ENCODE measurements at regions of chr3 and their contacts with region 1.

Region 1: DNA sequence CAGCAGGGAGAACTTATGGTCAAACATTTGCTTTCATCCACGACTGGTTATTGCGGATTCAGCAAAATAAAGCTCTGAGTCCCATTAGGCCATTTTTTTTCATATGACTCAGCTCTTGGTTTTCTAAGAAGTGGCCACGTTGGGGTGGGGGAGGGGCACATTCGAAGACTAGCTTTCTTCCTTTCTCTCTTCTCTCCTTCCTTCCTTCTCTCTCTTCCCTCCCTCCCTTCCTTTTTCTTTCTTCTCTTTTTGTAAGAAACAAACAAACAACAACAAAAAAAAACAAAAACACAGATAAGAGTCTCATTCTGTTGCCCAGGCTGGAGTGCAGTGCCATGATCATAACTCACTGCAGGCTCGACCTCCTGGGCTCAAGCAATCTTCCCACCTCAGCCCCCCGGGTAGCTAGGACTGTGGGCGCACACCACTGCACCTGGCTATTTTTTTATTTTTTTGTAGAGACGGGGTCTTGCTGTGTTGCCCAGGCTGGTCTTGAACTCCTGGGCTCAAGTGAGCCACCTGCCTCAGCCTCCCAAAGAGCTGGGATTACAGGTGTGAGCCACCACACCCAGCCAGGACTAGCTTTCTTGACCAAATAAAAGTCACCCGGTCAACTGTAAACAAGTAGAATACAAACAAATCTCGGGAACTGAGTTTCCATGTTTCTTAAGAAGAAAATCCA is 41.6 kb downstream of the ABCC5 start:
- DNase-seq: no peak
- ATAC-seq: no peak
- H3K4me3 ChIP-seq: no peak overlapping the region
- H3K27ac ChIP-seq: peak overlapping the region; percentile 21
- H3K4me1 ChIP-seq: peaks cover 40% of the 10 kb centered on the region
- H3K27me3 ChIP-seq: no peaks in the 10 kb centered on the region
- CTCF ChIP-seq: no peak

Region 2: GRCh38 chr3:182886497-182886896 is 1089.6 kb before region 1 on chr3:
- intact Hi-C with region 1: no loop called
- DNase-seq: no peak
- ATAC-seq: no peak
- H3K4me3 ChIP-seq: no peak overlapping the region
- H3K27ac ChIP-seq: no peak overlapping the region
- H3K4me1 ChIP-seq: no peaks in the 10 kb centered on the region
- H3K27me3 ChIP-seq: no peaks in the 10 kb centered on the region
- CTCF ChIP-seq: no peak

Region 3: GRCh38 chr3:184017672-184018423 is 41.7 kb after region 1 on chr3 and contains the start of gene ABCC5:
- intact Hi-C with region 1: loop called (anchors 1 to 5 kb)
- DNase-seq: peak; percentile 94 to 97
- ATAC-seq: peak; percentile 91 to 94 (median 94)
- H3K4me3 ChIP-seq: peak within 1 kb of the TSS; percentile 96
- H3K27ac ChIP-seq: peak within 1 kb of the TSS; percentile 89
- H3K4me1 ChIP-seq: peaks cover 25% of the 10 kb centered on the region
- H3K27me3 ChIP-seq: no peaks in the 10 kb centered on the region
- CTCF ChIP-seq: no peak
- total RNA-seq, gene ABCC5: 34.4 to 94.2 (median 55.6) TPM

Measured in psoas muscle (tissue), 8 donors.